ENCODE measurements at regions of chr18 and their contacts with region 1.

Region 1: GRCh38 chr18:77101410-77102258 is 30.9 kb downstream of the MBP start:
- DNase-seq: peak in 2 of 3 donors; percentile 73 to 78
- H3K4me3 ChIP-seq: peak overlapping the region in 4 of 7 experiments; percentile 22 to 51 (median 30)
- H3K27ac ChIP-seq: peak overlapping the region; percentile 59 to 72
- H3K4me1 ChIP-seq: peaks cover 38 to 99% (median 87%) of the 10 kb centered on the region in 4 experiments
- H3K27me3 ChIP-seq: no peaks in the 10 kb centered on the region

Region 2: DNA sequence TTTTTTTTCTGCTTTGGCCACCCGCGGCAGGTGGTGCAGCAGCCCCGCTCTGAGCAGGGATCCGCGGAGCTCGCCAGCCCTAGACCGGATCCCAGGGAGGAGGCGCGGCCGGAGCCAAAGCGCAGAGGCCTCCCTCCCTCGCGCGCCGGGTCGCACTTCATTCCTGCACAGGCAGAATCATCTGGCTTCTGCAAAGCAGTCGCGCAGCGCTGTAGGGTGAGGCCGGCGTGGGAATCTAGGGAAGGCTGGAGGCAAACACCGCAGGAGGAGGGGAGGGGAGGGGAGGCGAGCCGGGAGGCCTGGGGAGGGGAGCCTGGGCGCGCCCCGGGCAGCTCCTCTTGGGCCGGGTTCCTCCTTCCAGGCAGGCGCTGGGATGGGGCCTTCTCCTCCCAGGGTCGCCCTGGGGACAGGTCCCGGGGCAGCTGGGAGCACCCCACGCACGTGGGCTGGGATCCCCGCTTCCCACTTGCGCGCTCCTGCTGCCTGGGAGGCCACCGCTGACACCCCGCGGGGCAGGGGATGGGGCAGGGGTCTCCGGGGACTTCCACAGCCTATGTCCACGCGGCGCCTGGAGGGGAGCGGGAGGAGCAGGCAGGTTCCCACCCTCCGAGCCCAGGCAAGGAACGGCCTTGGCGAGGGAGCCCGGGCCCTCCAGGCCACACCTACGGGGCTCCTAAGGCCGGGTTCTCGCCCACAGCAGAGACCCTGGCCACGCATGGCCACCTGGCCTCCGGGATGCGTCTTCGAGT is 14.1 kb before region 1 on chr18:
- CTCF ChIA-PET with region 1: interaction called, 35 read pairs
- POLR2A ChIA-PET with region 1: no interaction called
- DNase-seq: no peak
- H3K4me3 ChIP-seq: no peak overlapping the region
- H3K27ac ChIP-seq: no peak overlapping the region
- H3K4me1 ChIP-seq: peaks cover 0 to 16% (median 11%) of the 10 kb centered on the region in 4 experiments
- H3K27me3 ChIP-seq: no peaks in the 10 kb centered on the region

Region 3: GRCh38 chr18:77147418-77147852 is 45.8 kb after region 1 on chr18:
- CTCF ChIA-PET with region 1: no interaction called
- POLR2A ChIA-PET with region 1: no interaction called
- DNase-seq: peak in 2 of 3 donors; percentile 77 to 85
- H3K4me3 ChIP-seq: no peak overlapping the region
- H3K27ac ChIP-seq: no peak overlapping the region
- H3K4me1 ChIP-seq: peaks cover 0 to 20% (median 10%) of the 10 kb centered on the region in 4 experiments
- H3K27me3 ChIP-seq: no peaks in the 10 kb centered on the region

Measured in common myeloid progenitor, CD34-positive (primary cell).